Caco-2 (cell line): ENCODE measurements at regions of chr19 and their contacts with region 1.

Region 1: GRCh38 chr19:7386308-7386707 is 37.6 kb downstream of the ARHGEF18 start:
- DNase-seq: peak; percentile 65 to 72
- H3K4me3 ChIP-seq: no peak overlapping the region
- H3K4me3 Mint-ChIP-seq: peak overlapping the region; percentile 48
- H3K27ac Mint-ChIP-seq: peak overlapping the region; percentile 80
- H3K4me1 ChIP-seq: peaks cover 16% of the 10 kb centered on the region
- H3K4me1 Mint-ChIP-seq: peaks cover 11% of the 10 kb centered on the region
- H3K27me3 ChIP-seq: no peaks in the 10 kb centered on the region
- H3K27me3 Mint-ChIP-seq: no peaks in the 10 kb centered on the region
- CTCF ChIP-seq: peak; percentile 39 to 55

Region 2: DNA sequence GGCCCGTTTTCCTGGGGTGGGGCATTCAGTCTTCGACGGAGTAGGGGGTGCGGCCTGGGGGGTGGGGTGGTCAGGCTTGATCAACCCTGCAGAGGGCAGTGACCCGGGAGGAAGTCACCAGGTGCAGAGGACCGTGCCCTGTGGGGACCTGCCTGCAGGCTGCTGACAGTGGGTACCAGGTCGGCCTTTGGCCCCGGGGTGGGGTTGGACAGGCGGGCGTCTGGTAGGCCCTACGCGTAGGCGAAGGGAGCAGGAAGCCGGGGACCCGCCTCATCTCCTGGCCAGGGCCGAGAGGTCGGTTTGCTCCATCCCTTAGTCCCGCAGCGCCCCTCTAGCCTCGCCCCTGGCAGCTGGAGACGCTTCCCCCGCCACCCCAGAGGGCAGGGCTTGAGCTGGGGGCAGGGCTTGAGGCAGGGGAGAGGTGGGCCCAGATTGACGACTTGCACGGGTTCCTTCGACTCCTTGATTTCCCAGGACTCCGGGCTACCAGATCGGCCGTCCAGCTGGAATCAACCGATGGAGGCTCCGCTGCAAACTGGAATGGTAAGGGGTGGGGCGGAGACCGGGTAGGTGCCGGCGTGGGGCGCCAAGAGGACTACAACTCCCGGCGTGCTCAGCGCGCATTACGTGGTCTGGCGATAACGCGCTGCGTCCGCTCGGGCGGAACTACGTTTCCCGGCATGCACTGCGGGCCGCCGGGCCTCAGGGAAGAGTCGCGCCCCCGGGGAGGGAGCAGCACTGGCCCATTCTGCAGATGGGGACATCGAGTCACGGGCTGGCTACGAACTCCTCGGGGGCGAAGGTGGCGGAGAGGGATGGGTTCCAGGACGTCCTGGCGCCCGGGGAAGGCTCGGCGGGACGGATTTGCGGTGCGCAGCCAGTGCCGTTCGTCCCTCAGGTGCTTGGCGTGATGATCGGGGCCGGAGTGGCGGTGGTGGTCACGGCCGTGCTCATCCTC is 149.0 kb after region 1 on chr19 and contains the start of gene PNPLA6:
- CTCF ChIA-PET with region 1: interaction called, 3 read pairs
- POLR2A ChIA-PET with region 1: no interaction called
- intact Hi-C with region 1: loop called (anchors 2 kb)
- DNase-seq: peak; percentile 93
- H3K4me3 ChIP-seq: peak within 1 kb of the TSS; percentile 69
- H3K4me3 Mint-ChIP-seq: peak within 1 kb of the TSS; percentile 97
- H3K27ac Mint-ChIP-seq: peak within 1 kb of the TSS; percentile 89
- H3K4me1 ChIP-seq: peaks cover 9% of the 10 kb centered on the region
- H3K4me1 Mint-ChIP-seq: no peaks in the 10 kb centered on the region
- H3K27me3 ChIP-seq: no peaks in the 10 kb centered on the region
- H3K27me3 Mint-ChIP-seq: no peaks in the 10 kb centered on the region
- CTCF ChIP-seq: no peak
- total RNA-seq, gene PNPLA6: 67.6 and 79.2 TPM in 2 replicates

Region 3: DNA sequence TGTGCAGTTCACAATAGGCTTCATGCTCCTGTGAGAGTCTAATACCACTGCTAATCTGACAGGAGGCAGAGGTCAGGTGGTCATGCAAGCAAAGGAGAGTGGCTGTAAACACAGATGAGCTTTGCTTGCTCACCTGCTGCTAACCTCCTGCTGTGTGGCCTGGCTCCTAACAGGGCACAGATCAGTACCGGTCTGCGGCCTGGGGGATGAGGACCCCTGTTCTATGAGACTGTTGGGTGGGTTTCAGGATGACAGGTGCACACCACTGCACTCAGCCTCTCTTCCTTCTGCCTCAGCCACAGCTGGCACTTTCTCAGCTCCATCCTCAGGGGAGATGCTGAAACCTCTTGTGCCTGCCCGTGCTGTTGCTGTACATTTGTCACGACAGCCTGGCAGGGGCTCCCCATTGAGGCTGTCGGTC is 335.9 kb after region 1 on chr19:
- CTCF ChIA-PET with region 1: no interaction called
- POLR2A ChIA-PET with region 1: no interaction called
- intact Hi-C with region 1: no loop called
- DNase-seq: no peak
- H3K4me3 ChIP-seq: no peak overlapping the region
- H3K4me3 Mint-ChIP-seq: no peak overlapping the region
- H3K27ac Mint-ChIP-seq: no peak overlapping the region
- H3K4me1 ChIP-seq: no peaks in the 10 kb centered on the region
- H3K4me1 Mint-ChIP-seq: no peaks in the 10 kb centered on the region
- H3K27me3 ChIP-seq: no peaks in the 10 kb centered on the region
- H3K27me3 Mint-ChIP-seq: peaks cover 4% of the 10 kb centered on the region
- CTCF ChIP-seq: no peak